K562 (cell line): ENCODE measurements at regions of chr12 and their contacts with region 1.

Region 1: DNA sequence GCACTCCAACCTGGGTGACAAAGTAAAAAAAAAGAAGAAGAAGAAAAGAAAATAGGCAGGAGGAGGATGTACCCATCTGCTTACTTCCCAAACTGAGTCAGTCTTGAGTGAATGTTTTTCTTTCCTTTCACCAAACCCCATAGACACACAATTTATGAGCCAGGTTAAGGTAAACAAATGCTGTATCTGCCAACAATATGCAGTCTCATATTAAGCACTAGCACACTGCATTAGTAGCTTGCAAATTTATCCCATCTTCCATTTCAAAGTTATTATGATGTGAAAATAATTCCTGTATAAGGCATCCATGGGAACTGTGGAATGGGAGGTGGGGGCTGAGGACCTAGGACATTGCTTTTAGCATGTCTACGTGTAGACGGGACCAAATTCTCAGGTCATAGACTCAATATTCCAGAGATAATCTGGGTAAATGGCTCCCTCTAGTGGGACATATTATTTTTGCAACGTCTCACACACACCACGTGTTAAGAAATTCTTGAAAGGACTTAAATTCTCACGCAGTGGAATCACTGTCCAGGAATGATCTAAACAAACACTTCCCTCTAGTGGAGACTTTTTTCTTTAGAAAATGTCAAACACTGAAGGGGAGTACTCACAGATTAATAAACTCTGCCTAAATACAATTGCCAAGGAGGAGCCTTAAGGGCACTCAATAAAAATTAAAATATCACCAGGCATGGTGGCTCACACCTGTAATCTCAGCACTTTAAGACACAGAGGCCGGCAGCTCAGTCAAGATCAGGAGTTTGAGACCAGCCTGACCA is 17.1 kb upstream of the OR10P1 start:
- DNase-seq: peak; percentile 66 to 88 (median 70)
- ATAC-seq: peak; percentile 99
- H3K4me3 ChIP-seq: no peak overlapping the region
- H3K27ac ChIP-seq: no peak overlapping the region
- H3K4me1 ChIP-seq: no peaks in the 10 kb centered on the region
- H3K27me3 ChIP-seq: no peaks in the 10 kb centered on the region
- CTCF ChIP-seq: peak; percentile 81 to 98 (median 83)
- EP300 ChIP-seq: no peak
- POLR2A ChIP-seq: no peak
- RAD21 ChIP-seq: peak; percentile 96 to 98

Region 2: DNA sequence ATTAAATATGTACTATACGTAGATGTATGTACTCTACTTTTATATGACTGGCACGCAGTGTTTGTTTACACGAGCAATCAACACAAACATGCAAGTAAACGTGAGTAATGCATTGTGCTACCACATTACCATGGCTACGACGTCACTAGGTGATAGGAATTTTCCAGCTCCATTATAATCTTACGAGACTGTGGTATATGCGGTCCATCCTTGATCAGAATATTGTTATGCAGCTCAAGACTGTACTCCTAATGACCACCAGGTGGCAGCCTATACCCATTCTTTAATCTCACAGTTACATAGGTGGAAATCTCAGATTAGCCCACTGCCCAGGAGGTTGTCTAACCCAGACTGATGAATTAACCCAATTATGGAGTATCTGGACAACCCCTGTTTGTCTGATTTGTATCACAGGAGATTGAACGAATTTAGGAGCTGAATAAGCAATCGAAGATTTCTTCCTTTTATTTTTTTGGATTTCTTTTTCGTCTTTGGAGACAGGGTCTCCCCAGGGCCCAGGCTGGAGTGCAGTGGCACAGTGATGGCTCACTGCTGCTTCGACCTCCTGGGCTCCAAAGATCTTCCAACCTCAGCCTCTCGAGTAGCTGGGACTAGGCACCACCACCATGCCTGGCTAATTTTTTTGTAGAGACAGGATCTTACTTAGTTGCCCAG is 626.2 kb before region 1 on chr12:
- CTCF ChIA-PET with region 1: interaction called, 5 read pairs
- POLR2A ChIA-PET with region 1: no interaction called
- in situ Hi-C with region 1: no loop called
- intact Hi-C with region 1: loop called (anchors 2 kb)
- DNase-seq: peak; percentile 65 to 79 (median 68)
- ATAC-seq: peak; percentile 88
- H3K4me3 ChIP-seq: no peak overlapping the region
- H3K27ac ChIP-seq: no peak overlapping the region
- H3K4me1 ChIP-seq: peaks cover 3 to 20% of the 10 kb centered on the region in 2 experiments; a peak in 4 of 5 replicates
- H3K27me3 ChIP-seq: peaks cover 0 to 7% of the 10 kb centered on the region in 2 experiments; a peak in 1 of 5 replicates
- CTCF ChIP-seq: peak; percentile 81 to 90 (median 81)
- EP300 ChIP-seq: no peak
- POLR2A ChIP-seq: no peak
- RAD21 ChIP-seq: peak; percentile 94 to 96

Region 3: GRCh38 chr12:55188974-55189556 is 430.5 kb before region 1 on chr12:
- CTCF ChIA-PET with region 1: interaction called, 75 read pairs
- POLR2A ChIA-PET with region 1: no interaction called
- in situ Hi-C with region 1: no loop called
- intact Hi-C with region 1: loop called (anchors 1 kb)
- DNase-seq: peak; percentile 55 to 86 (median 62)
- ATAC-seq: peak; percentile 93
- H3K4me3 ChIP-seq: no peak overlapping the region
- H3K27ac ChIP-seq: no peak overlapping the region
- H3K4me1 ChIP-seq: no peaks in the 10 kb centered on the region
- H3K27me3 ChIP-seq: no peaks in the 10 kb centered on the region; a peak in 1 of 5 replicates
- CTCF ChIP-seq: peak; percentile 50 to 87 (median 58); a peak in 5 of 6 replicates
- EP300 ChIP-seq: no peak
- POLR2A ChIP-seq: no peak
- RAD21 ChIP-seq: peak; percentile 96 to 97

Region 4: DNA sequence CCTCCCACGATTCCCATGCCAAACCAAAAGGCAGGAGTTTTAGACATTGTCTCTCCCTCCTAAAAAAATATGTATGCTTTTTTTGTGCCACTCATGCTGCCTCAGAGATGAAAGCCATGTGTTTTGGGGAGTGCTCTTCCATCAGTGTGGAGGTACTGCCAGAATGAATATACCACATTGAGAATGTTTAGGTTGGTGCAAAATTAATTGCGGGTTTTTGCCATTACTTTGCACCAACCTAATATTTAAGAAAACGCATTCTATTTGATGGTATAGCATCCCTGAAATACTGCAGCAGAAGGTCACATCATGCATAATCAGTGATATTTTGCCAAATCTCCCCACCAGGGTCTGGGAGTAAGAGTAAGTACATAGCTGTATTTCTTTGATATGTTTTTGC is 423.4 kb before region 1 on chr12:
- CTCF ChIA-PET with region 1: interaction called, 75 read pairs
- POLR2A ChIA-PET with region 1: no interaction called
- in situ Hi-C with region 1: loop called (anchors 5 kb)
- intact Hi-C with region 1: no loop called
- DNase-seq: no peak
- ATAC-seq: no peak
- H3K4me3 ChIP-seq: no peak overlapping the region
- H3K27ac ChIP-seq: no peak overlapping the region
- H3K4me1 ChIP-seq: no peaks in the 10 kb centered on the region
- H3K27me3 ChIP-seq: no peaks in the 10 kb centered on the region
- CTCF ChIP-seq: no peak
- EP300 ChIP-seq: no peak
- POLR2A ChIP-seq: no peak
- RAD21 ChIP-seq: no peak

Region 5: DNA sequence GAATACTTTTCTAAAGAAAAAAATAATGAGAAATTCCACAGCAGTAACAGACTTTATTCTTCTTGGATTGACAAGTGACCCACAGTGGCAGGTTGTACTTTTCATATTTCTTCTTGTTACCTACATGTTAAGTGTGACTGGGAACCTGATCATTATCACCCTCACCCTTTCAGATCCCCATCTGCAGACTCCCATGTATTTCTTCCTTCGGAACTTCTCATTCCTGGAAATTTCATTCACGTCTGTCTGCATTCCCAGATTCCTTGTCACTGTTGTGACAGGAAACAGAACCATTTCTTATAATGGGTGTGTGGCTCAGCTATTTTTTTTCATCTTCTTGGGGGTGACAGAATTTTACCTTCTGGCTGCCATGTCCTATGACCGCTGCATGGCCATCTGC is 254.5 kb before region 1 on chr12:
- CTCF ChIA-PET with region 1: no interaction called
- POLR2A ChIA-PET with region 1: no interaction called
- in situ Hi-C with region 1: no loop called
- intact Hi-C with region 1: loop called (anchors 10 kb)
- DNase-seq: no peak
- ATAC-seq: no peak
- H3K4me3 ChIP-seq: no peak overlapping the region
- H3K27ac ChIP-seq: no peak overlapping the region
- H3K4me1 ChIP-seq: no peaks in the 10 kb centered on the region
- H3K27me3 ChIP-seq: no peaks in the 10 kb centered on the region
- CTCF ChIP-seq: no peak
- EP300 ChIP-seq: no peak
- POLR2A ChIP-seq: no peak
- RAD21 ChIP-seq: no peak

Region 6: GRCh38 chr12:55446326-55446725 is 173.2 kb before region 1 on chr12:
- CTCF ChIA-PET with region 1: interaction called, 25 read pairs
- POLR2A ChIA-PET with region 1: no interaction called
- in situ Hi-C with region 1: no loop called
- intact Hi-C with region 1: loop called (anchors 1 kb)
- DNase-seq: no peak
- ATAC-seq: peak; percentile 40; the same call in 1 of the 3 replicates
- H3K4me3 ChIP-seq: no peak overlapping the region
- H3K27ac ChIP-seq: no peak overlapping the region
- H3K4me1 ChIP-seq: no peaks in the 10 kb centered on the region
- H3K27me3 ChIP-seq: no peaks in the 10 kb centered on the region
- CTCF ChIP-seq: peak; percentile 11 to 25 (median 21); a peak in 3 of 6 replicates
- EP300 ChIP-seq: no peak
- POLR2A ChIP-seq: no peak
- RAD21 ChIP-seq: peak; percentile 40 to 54

Region 7: DNA sequence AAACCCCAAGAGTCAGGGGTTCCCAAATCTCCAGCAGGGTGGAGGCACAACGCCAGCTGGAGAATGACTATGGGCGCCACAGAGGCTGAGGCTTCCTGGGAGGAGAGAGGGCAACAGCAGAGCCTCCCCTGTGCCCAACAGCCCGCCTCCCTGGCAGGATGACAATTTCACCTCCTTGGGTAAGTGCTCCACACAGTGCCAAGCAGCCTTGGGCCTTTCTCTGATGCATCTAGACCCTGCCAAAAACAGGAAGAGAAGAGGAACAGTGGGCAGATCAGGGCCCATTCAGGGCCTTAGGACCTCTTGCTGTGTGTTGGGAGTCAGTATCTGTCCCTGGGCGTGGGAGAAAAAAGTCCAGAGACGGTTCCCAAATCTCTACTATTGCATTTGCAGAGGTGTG is 12.2 kb after region 1 on chr12:
- CTCF ChIA-PET with region 1: no interaction called
- POLR2A ChIA-PET with region 1: no interaction called
- in situ Hi-C with region 1: no loop called
- intact Hi-C with region 1: no loop called
- DNase-seq: no peak
- ATAC-seq: no peak; the same call in 2 of the 3 replicates
- H3K4me3 ChIP-seq: no peak overlapping the region
- H3K27ac ChIP-seq: no peak overlapping the region
- H3K4me1 ChIP-seq: no peaks in the 10 kb centered on the region
- H3K27me3 ChIP-seq: peaks cover 11 to 16% of the 10 kb centered on the region in 2 experiments; a peak in 4 of 5 replicates
- CTCF ChIP-seq: no peak
- EP300 ChIP-seq: no peak
- POLR2A ChIP-seq: no peak
- RAD21 ChIP-seq: no peak

Region 8: DNA sequence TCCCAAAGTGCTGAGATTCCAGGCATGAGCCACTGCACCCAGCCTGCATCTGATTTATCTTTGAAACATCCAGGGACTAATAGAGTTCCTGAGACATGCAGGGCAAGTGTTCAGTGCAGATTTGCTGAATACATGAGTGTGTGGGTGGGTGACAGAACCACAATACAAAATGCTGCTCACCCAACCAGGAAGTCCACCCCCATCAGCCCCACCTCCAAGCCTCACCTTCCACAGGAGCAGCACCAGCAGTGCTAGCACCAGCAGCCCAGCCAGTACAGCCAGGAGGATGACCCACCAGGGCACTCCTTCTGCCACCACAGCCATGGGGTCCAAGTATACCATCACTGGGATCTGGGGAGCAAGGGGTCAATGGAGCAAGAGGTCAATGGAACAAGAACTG is 68.2 kb after region 1 on chr12:
- CTCF ChIA-PET with region 1: no interaction called
- POLR2A ChIA-PET with region 1: no interaction called
- in situ Hi-C with region 1: no loop called
- intact Hi-C with region 1: no loop called
- DNase-seq: no peak
- ATAC-seq: no peak
- H3K4me3 ChIP-seq: no peak overlapping the region
- H3K27ac ChIP-seq: no peak overlapping the region
- H3K4me1 ChIP-seq: no peaks in the 10 kb centered on the region
- H3K27me3 ChIP-seq: peaks cover 40 to 51% of the 10 kb centered on the region in 2 experiments
- CTCF ChIP-seq: no peak
- EP300 ChIP-seq: no peak
- POLR2A ChIP-seq: no peak
- RAD21 ChIP-seq: no peak